Activated naive CD8-positive, alpha-beta T cell treated with anti-CD3 and anti-CD28 coated beads, Interleukin-2, amount 10 ng/mL, durations not matched to agents 7 days and 5 days (primary cell): ENCODE measurements at regions of chr17 and their contacts with region 1.

Region 1: GRCh38 chr17:2259769-2260536 is 43.6 kb downstream of the SMG6 start:
- DNase-seq: peak; percentile 66
- ATAC-seq: peak; percentile 72
- H3K4me3 Mint-ChIP-seq: peak overlapping the region; percentile 84
- H3K27ac Mint-ChIP-seq: peak overlapping the region; percentile 93
- H3K4me1 Mint-ChIP-seq: peaks cover 62% of the 10 kb centered on the region
- H3K27me3 Mint-ChIP-seq: no peaks in the 10 kb centered on the region

Region 2: DNA sequence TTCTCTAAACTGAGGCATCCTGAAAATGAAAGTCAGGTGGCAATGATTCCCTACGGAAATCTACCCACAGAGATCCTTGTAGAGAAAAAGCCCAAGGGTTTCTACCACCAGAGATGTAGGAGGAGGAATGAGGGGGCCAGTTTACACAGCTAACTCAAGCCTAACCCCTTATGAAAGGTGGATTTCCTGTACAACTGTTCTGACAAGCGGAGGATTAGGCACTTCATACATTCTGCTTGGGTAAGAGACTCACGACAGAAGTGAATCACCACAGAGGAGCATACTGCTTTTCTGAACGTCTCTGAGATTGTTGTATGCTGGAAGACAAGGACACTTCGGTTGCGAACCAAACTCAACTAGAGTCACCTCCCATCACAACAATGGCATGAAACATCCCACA is 29.1 kb before region 1 on chr17:
- POLR2A ChIA-PET with region 1: no interaction called
- DNase-seq: no peak
- ATAC-seq: peak; percentile 59
- H3K4me3 Mint-ChIP-seq: peak overlapping the region; percentile 12
- H3K27ac Mint-ChIP-seq: peak overlapping the region; percentile 23
- H3K4me1 Mint-ChIP-seq: peaks cover 45% of the 10 kb centered on the region
- H3K27me3 Mint-ChIP-seq: no peaks in the 10 kb centered on the region

Region 3: DNA sequence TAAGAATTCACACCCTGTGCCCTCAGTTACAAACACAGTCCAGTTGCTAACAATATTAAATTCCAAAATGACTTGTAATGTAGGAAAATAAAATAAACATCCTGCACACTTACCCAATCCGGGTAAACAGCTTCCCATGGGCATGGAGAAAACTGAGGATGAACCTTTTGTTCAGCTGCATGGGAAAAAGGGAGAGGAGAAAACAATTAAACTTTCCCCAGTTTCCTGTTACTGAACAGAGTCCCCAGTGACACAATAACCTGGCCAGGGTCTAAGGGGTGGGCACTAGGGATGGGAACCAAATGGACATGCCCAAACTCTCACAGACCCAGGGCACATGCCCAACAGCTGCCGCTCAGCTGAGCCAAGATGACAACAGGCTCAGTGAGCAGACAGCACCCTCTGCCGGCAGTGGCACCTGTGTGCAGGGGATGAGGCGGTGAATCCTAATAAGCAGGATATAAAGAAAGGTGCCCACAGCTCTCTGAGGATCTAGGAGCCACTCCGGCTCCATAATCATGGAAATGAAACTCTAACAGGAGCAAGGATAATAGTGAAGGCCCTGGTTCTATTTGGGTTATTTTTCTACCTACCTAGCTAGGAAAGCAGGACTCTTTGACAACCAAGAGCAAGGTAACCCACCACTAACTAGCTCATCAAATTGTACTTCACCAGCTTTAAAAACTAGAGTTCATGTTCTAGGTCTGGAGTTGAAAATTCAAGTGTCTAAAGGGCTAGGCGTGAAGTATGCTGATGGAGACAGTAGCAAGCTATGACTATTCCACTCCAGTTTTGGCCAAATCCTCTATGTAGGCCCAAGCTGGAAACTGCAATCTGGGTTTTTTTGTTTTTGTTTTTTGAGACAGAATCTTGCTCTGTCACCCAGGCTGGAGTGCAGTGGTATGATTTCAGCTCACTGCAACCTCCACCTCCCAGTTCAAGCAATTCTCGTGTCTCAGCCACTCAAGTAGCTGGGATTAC is 15.1 kb before region 1 on chr17:
- POLR2A ChIA-PET with region 1: interaction called, 86 read pairs
- DNase-seq: peak; percentile 86
- ATAC-seq: peak; percentile 91
- H3K4me3 Mint-ChIP-seq: peak overlapping the region; percentile 12
- H3K27ac Mint-ChIP-seq: peak overlapping the region; percentile 81
- H3K4me1 Mint-ChIP-seq: peaks cover 61% of the 10 kb centered on the region
- H3K27me3 Mint-ChIP-seq: no peaks in the 10 kb centered on the region

Region 4: DNA sequence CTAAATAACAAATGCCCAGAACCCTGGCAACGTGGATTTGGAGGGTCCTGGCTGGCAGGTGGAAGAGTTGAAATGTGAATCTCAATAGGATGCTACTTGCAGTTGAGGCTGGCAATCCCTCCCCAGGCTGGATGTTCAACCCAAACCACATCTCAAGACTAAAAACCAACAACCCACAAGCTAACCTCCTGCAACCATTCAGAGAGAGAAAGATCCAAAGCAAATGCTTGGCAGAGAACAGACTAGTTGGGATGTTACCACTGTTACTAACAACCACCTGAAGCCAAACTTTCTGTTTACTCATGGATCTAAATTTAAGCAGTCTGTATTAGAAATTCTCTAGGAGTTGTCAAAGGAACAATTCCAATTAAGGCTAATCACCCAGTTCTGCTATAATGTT is 15.8 kb after region 1 on chr17:
- POLR2A ChIA-PET with region 1: interaction called, 28 read pairs
- DNase-seq: no peak
- ATAC-seq: peak; percentile 75
- H3K4me3 Mint-ChIP-seq: peak overlapping the region; percentile 80
- H3K27ac Mint-ChIP-seq: peak overlapping the region; percentile 87
- H3K4me1 Mint-ChIP-seq: peaks cover 58% of the 10 kb centered on the region
- H3K27me3 Mint-ChIP-seq: no peaks in the 10 kb centered on the region